ENCODE measurements at regions of chr20 and their contacts with region 1.

Region 1: GRCh38 chr20:62900052-62900691 is 26.1 kb downstream of the DIDO1 start:
- DNase-seq: peak; percentile 83
- H3K4me3 Mint-ChIP-seq: no peak overlapping the region
- H3K27ac Mint-ChIP-seq: peak overlapping the region; percentile 89
- H3K4me1 Mint-ChIP-seq: peaks cover 46% of the 10 kb centered on the region
- H3K27me3 Mint-ChIP-seq: peaks cover 4% of the 10 kb centered on the region

Region 2: GRCh38 chr20:62872184-62872847 is 27.9 kb before region 1 on chr20:
- CTCF ChIA-PET with region 1: no interaction called
- DNase-seq: no peak
- H3K4me3 Mint-ChIP-seq: no peak overlapping the region
- H3K27ac Mint-ChIP-seq: no peak overlapping the region
- H3K4me1 Mint-ChIP-seq: peaks cover 21% of the 10 kb centered on the region
- H3K27me3 Mint-ChIP-seq: peaks cover 41% of the 10 kb centered on the region

Region 3: GRCh38 chr20:62914970-62915457 is 14.8 kb after region 1 on chr20:
- CTCF ChIA-PET with region 1: interaction called, 58 read pairs
- DNase-seq: peak; percentile 53
- H3K4me3 Mint-ChIP-seq: no peak overlapping the region
- H3K27ac Mint-ChIP-seq: peak overlapping the region; percentile 53
- H3K4me1 Mint-ChIP-seq: peaks cover 63% of the 10 kb centered on the region
- H3K27me3 Mint-ChIP-seq: no peaks in the 10 kb centered on the region

Region 4: GRCh38 chr20:62921119-62921687 is 21.0 kb after region 1 on chr20:
- CTCF ChIA-PET with region 1: interaction called, 58 read pairs
- DNase-seq: peak; percentile 76
- H3K4me3 Mint-ChIP-seq: peak overlapping the region; percentile 64
- H3K27ac Mint-ChIP-seq: peak overlapping the region; percentile 90
- H3K4me1 Mint-ChIP-seq: peaks cover 84% of the 10 kb centered on the region
- H3K27me3 Mint-ChIP-seq: no peaks in the 10 kb centered on the region

Region 5: DNA sequence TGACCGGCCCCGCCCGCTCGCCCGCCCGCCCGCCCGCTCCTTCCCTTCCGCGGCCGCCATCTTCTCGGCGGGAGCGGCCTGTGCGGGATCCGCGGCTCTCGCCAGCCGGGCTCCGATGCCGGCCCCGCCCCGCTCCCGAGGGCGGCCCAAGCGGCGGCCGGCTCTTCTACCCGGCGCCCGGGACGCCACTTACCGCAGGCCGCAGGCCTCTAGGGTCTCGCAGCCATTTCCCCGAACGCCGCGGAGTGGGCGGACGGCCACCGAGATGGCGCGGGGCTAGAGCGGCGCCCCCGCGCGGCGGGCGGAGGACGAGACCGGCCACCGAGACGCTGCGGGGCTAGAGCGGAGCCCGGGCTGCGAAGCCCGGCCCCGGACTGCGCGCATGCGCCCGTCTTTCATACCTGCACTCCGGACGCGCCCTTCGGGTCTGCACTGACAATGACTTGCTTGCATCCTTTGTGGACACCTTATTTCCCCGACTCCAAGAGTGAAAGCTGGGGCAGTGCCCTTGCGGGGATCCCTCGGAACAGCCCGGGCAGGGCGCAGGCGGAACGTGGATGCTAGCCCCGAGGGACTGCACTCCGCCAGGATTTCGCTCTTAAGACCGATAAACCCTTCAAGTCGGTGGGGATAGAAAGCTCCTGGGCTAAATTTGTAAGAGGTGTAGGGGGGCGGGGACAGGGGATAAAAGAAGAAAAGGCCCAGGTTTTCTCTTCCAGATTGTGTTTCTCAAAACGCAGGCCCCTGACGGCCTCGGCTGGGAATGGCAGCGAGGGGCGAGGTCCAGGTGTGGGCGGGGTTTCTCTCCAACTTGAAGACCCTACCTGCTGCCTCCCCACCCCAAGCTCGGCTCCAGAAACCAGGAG is 26.3 kb after region 1 on chr20 and contains the start of gene DIDO1:
- CTCF ChIA-PET with region 1: interaction called, 58 read pairs
- DNase-seq: peak; percentile 91
- H3K4me3 Mint-ChIP-seq: peak within 1 kb of the TSS; percentile 97
- H3K27ac Mint-ChIP-seq: peak within 1 kb of the TSS; percentile 95
- H3K4me1 Mint-ChIP-seq: peaks cover 78% of the 10 kb centered on the region
- H3K27me3 Mint-ChIP-seq: no peaks in the 10 kb centered on the region

Region 6: DNA sequence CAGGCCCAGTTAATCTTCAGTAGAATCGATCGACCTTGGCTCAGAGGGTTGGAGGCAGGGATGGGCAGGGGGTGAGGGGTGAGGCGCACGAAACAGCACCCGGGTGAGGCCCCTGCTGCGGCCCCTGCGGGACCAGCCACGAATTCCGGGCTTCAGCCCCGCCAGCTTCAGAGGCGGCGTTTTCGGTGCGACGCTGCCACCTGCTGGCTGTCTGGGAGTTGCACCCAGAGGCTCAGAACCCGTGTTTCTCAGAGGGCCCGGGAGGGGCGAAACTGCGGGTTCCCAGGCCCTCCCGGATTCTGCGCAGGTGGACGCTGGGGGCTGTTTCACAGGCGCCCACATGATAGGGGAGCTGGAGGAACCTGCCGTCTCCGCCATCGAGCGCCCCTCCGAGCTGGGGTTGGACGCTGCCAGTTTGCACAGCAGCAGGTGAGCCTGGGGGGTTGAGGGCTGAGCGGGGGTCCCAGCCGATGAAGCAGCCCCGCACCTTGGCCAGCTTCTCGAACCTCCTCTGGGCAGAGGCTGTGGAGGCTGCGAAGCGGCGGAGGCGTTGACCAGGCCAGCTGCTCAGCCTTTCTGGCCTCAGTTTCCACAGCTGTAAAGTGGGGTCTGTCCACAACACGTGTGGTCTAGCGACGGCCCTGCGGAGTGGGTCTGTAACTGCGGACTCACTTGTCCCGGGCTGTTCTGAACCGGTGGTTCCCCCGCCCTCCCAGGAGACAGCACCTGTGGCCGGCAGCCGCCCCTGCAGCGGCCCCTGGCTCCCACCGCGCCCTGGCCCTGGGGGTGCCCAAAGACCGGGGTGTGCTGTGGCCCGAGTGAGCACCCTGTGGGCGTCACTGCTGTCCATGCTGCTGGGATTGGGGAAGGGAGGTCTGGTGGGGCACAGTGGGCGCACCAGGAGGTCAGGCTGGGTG is 109.1 kb after region 1 on chr20:
- CTCF ChIA-PET with region 1: interaction called, 13 read pairs
- DNase-seq: peak; percentile 88
- H3K4me3 Mint-ChIP-seq: no peak overlapping the region
- H3K27ac Mint-ChIP-seq: peak overlapping the region; percentile 65
- H3K4me1 Mint-ChIP-seq: peaks cover 21% of the 10 kb centered on the region
- H3K27me3 Mint-ChIP-seq: peaks cover 99% of the 10 kb centered on the region

Measured in activated naive CD4-positive, alpha-beta T cell treated with anti-CD3 and anti-CD28 coated beads, Interleukin-2, amount 10 ng/mL, durations not matched to agents 7 days and 5 days (primary cell).